A549 (cell line): ENCODE measurements at regions of chr14 and their contacts with region 1.

Region 1: DNA sequence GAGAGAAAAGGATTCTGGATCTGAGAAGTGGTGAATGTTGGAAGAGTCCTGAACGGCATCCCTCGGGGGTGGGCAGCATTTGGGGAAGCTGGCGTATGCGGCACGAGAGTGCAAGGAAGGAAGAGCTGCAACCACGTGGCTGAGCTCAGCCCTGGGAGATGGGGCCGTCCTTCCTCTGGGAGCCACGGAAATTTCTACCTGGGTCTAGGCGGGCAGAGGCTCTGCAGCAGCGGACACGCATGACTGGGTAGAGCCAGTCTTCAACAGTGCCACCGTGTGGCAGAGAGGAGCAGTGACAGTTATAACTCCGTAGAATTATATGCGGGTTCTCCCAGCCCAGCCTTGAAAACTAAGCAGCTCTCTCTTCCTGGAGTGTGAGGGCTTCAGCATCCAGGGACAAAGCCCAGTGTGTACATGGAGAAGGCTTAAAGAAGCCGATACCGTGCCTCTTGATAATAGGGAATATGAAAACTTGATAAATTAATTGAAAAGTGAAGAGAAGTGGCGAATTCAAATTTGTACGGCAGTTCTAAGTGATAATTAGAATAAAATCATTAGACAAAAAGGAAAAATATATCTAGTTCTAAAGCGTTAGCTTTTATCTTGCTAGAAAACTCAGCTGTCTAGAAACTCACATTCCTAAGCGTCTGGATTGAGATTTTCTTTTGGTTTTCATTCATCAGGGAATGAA is 82.9 kb upstream of the STXBP6 start:
- DNase-seq: peak; percentile 44 to 67
- ATAC-seq: peak; percentile 97 to 99
- H3K4me3 ChIP-seq: no peak overlapping the region
- H3K27ac ChIP-seq: no peak overlapping the region
- H3K4me1 ChIP-seq: no peaks in the 10 kb centered on the region
- CTCF ChIP-seq: peak; percentile 62
- EP300 ChIP-seq: no peak
- POLR2A ChIP-seq: no peak
- RAD21 ChIP-seq: peak; percentile 61 to 62

Region 2: DNA sequence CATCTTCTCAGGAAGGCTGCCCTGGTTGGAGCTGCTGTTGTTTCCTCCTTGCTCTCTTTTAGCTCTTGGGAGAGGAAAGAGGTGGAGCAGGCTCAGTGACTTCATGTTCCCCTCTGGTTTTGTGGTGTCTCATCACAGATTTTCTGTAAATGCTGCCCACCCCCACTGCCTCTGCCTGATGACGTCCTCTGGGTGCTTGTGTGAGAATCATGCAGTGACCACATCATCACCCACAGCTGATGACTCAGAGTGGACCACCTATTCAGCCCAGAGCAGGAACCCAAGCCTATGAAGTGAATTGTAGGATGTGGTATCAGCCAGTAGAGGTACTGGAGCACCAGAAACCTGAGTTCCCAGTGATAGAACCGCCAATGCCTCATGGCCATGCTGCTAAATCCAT is 498.7 kb before region 1 on chr14 and contains the start of gene GZMB:
- CTCF ChIA-PET with region 1: no interaction called
- POLR2A ChIA-PET with region 1: no interaction called
- DNase-seq: no peak
- ATAC-seq: no peak
- H3K4me3 ChIP-seq: no peak within 1 kb of the TSS
- H3K27ac ChIP-seq: no peak within 1 kb of the TSS
- H3K4me1 ChIP-seq: no peaks in the 10 kb centered on the region
- CTCF ChIP-seq: no peak
- EP300 ChIP-seq: no peak
- POLR2A ChIP-seq: no peak
- RAD21 ChIP-seq: no peak
- polyA plus RNA-seq, gene GZMB: not detected in 2 replicates

Region 3: DNA sequence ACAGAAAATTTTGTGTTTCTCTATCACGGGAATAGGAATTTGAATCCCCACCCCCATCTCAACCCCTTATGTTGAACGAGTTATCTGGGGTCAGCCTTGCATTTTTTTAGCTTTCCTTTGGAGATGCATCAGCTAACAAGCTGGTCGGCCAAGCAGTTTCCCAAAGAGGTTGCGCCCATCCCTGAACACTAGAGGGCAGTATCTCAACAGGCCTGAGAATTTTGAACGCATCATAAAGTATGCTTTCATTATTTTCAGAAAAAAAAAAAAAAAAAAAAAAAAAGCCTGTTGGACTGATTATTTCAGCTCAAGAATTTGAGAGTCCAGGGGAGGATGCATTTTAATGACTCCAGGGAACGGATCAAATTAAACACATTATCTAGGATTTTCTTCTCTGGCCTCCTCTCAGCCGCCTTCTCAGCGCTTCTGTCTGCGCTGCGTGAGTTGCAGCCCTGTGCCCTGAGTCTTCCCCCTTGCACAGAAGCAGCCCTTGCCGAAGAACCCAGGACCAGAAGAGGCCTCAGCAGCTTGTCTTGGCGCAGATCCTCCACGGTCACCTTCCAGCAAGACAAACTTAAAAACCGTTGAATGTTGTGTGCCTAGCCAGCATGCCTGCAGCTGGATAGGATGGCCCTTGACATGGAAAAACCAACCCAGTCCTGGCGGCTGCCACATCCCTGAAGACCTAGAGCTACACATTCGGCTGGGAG is 422.3 kb before region 1 on chr14:
- CTCF ChIA-PET with region 1: interaction called, 21 read pairs
- POLR2A ChIA-PET with region 1: no interaction called
- DNase-seq: peak; percentile 26 to 58
- ATAC-seq: peak; percentile 72 to 89; a peak in 4 of 6 replicates
- H3K4me3 ChIP-seq: no peak overlapping the region
- H3K27ac ChIP-seq: no peak overlapping the region
- H3K4me1 ChIP-seq: no peaks in the 10 kb centered on the region
- CTCF ChIP-seq: peak; percentile 72
- EP300 ChIP-seq: no peak
- POLR2A ChIP-seq: no peak
- RAD21 ChIP-seq: peak; percentile 61 to 68; a peak in 4 of 5 replicates

Region 4: GRCh38 chr14:24806061-24806678 is 326.7 kb before region 1 on chr14:
- CTCF ChIA-PET with region 1: interaction called, 90 read pairs
- POLR2A ChIA-PET with region 1: no interaction called
- DNase-seq: peak; percentile 17 to 68
- ATAC-seq: peak; percentile 80 to 85; a peak in 5 of 6 replicates
- H3K4me3 ChIP-seq: no peak overlapping the region
- H3K27ac ChIP-seq: no peak overlapping the region
- H3K4me1 ChIP-seq: no peaks in the 10 kb centered on the region
- CTCF ChIP-seq: peak; percentile 69
- EP300 ChIP-seq: no peak
- POLR2A ChIP-seq: no peak
- RAD21 ChIP-seq: peak; percentile 82 to 86

Region 5: GRCh38 chr14:24817212-24818057 is 315.4 kb before region 1 on chr14:
- CTCF ChIA-PET with region 1: interaction called, 19 read pairs
- POLR2A ChIA-PET with region 1: no interaction called
- DNase-seq: peak in 1 of 2 experiments; percentile 24
- ATAC-seq: peak; percentile 62 to 63; a peak in 4 of 6 replicates
- H3K4me3 ChIP-seq: no peak overlapping the region
- H3K27ac ChIP-seq: no peak overlapping the region
- H3K4me1 ChIP-seq: peaks cover 12% of the 10 kb centered on the region; the same call in 1 of the 3 replicates
- CTCF ChIP-seq: 0 out of 3 replicates have a peak, but pooled peaks have one; percentile 23
- EP300 ChIP-seq: no peak
- POLR2A ChIP-seq: no peak
- RAD21 ChIP-seq: peak; percentile 40 to 47

Region 6: DNA sequence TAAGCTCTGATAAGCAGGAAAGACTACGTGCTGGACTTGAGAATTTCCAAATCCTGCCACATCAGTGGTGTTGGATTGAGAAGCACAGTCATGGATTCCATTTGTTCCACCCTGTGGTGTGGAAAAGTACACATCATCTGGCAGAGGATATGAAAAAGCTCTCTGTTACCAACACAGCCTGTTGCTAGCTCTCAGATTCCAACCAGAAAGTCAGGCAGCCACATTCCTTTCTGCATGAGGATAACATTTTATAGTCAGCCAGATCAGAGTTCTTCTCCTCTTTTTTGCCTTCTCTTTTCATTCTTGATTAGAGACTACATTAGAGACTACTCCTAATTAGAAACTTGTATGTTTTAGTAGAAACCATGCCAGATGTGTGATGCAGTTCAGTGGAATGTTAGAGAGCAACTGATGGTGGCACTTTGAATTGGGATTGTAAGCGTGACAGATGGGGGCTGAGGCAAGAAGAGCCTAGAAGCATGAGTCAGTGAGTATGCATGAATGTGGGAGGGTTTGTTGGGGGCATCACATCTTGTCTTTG is 21.7 kb before region 1 on chr14:
- CTCF ChIA-PET with region 1: interaction called, 22 read pairs
- POLR2A ChIA-PET with region 1: no interaction called
- DNase-seq: peak in 1 of 2 experiments; percentile 38
- ATAC-seq: peak; percentile 49 to 78; a peak in 4 of 6 replicates
- H3K4me3 ChIP-seq: no peak overlapping the region
- H3K27ac ChIP-seq: no peak overlapping the region
- H3K4me1 ChIP-seq: no peaks in the 10 kb centered on the region
- CTCF ChIP-seq: no peak
- EP300 ChIP-seq: no peak
- POLR2A ChIP-seq: no peak
- RAD21 ChIP-seq: no peak

Region 7: GRCh38 chr14:25121337-25122122 is 11.3 kb before region 1 on chr14:
- CTCF ChIA-PET with region 1: interaction called, 13 read pairs
- POLR2A ChIA-PET with region 1: no interaction called
- DNase-seq: peak in 1 of 2 experiments; percentile 53
- ATAC-seq: peak; percentile 75 to 80; a peak in 5 of 6 replicates
- H3K4me3 ChIP-seq: no peak overlapping the region
- H3K27ac ChIP-seq: peak overlapping the region; percentile 38 to 68; a peak in 4 of 6 replicates
- H3K4me1 ChIP-seq: peaks cover 15% of the 10 kb centered on the region
- CTCF ChIP-seq: no peak
- EP300 ChIP-seq: no peak
- POLR2A ChIP-seq: no peak
- RAD21 ChIP-seq: no peak

Region 8: DNA sequence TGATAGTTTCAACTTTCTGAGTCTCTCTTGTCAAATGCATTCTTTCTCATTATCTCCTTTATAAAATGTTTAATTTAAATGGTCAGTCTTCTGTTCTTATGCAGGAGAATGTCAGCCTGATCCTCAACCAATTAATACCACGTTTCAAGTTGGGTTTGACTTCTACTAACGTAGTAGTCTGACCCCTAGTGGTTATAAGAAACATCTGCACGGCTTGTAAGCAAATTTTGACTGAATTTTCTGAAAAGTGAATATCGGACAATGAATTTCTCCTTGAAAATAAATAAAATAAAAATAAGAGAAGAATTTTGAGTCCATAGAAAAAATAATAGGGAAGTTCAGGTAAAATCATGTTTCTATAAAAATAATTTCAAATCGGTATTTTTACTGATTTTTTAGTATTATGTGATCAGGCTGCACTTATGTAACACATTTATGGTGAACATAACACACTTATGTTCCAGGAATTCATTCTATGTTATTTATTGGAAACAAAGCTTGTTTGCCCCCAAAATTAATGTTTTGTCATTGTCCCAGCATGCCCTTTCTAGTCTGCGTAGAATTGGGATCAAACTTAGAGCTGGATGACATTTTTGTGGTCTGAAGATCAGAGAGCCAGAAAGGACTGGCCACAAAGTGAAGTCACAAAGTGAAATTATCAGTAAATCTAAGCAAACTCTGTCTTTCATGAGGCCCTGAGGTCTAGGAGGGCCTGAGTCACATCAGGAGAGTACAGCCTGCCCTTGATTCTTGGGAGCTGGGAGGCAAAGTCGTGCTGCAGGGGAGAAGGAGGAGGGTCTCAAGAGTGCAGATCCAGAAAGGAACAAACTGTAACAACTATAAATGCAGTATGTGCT is 18.3 kb after region 1 on chr14:
- CTCF ChIA-PET with region 1: interaction called, 12 read pairs
- POLR2A ChIA-PET with region 1: no interaction called
- DNase-seq: peak; percentile 10 to 54
- ATAC-seq: peak in 1 of 2 experiments; percentile 51; a peak in 1 of 6 replicates
- H3K4me3 ChIP-seq: no peak overlapping the region
- H3K27ac ChIP-seq: no peak overlapping the region
- H3K4me1 ChIP-seq: no peaks in the 10 kb centered on the region
- CTCF ChIP-seq: peak; percentile 63
- EP300 ChIP-seq: no peak
- POLR2A ChIP-seq: no peak
- RAD21 ChIP-seq: peak; percentile 59 to 61; a peak in 4 of 5 replicates

Region 9: GRCh38 chr14:25349269-25349668 is 216.4 kb after region 1 on chr14:
- CTCF ChIA-PET with region 1: no interaction called
- POLR2A ChIA-PET with region 1: no interaction called
- DNase-seq: no peak
- ATAC-seq: no peak
- H3K4me3 ChIP-seq: no peak overlapping the region
- H3K27ac ChIP-seq: no peak overlapping the region
- H3K4me1 ChIP-seq: no peaks in the 10 kb centered on the region
- CTCF ChIP-seq: no peak
- EP300 ChIP-seq: no peak
- POLR2A ChIP-seq: no peak
- RAD21 ChIP-seq: no peak